ENCODE measurements at regions of chr13 and their contacts with region 1.

Region 1: DNA sequence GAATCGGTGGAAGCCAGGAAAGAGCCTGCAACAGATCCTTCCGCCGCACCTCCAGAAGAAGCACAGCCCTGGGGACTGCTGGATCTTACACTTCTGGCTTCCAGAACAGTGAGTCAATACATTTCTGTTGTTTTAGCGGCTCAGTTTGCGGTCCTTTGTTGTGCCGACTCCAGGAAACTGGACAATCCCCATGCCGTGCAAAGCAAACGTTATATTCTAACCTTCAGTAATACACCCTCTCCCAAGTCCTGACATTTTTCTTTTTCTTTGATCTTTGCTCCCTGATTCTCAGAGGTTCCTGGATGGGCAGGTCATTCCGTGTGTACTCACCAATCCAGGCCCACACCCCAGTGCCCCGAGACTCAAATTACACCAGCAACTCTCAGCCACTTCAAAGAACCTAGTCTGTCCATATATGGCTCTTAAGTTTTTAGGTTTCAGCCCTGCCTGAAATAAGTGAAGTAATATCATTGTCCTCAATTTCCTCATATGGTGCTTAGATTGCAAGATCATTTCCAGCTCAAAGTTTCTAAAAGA is 387.1 kb upstream of the SGCG start:
- DNase-seq: no peak
- ATAC-seq: no peak
- H3K4me3 ChIP-seq: no peak overlapping the region
- H3K27ac ChIP-seq: no peak overlapping the region
- H3K4me1 ChIP-seq: no peaks in the 10 kb centered on the region
- H3K27me3 ChIP-seq: no peaks in the 10 kb centered on the region

Region 2: DNA sequence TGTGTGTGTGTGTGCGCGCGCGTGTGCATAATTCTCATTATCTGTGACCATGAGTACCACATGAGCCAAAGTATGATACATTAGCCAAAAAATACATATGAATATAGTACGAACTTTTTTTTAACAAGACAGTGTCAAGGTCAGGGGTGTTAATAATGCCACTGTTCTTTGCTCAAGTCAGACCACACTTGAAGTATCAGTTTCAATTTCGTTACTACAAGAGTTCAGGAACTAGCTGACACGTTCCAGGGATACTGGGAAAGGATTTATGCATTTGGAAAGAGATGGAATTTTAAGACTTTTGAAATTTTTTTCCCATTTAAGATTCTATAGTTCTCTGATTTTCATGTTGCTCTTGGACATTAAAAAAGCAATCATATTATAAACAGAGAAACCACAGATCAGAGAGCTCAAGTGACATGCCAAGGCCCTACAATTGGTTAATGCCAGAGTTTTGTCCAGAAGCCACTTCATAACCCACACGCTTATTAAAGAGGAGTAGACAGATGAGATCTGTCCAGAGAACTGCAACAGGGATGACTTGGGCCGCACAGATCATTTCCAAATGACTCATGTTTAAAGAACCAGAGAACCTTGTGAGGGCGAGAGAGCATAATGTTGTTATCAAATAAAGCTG is 331.7 kb before region 1 on chr13:
- intact Hi-C with region 1: no loop called
- DNase-seq: no peak
- ATAC-seq: peak; percentile 78 to 88
- H3K4me3 ChIP-seq: no peak overlapping the region
- H3K27ac ChIP-seq: no peak overlapping the region
- H3K4me1 ChIP-seq: peaks cover 2% of the 10 kb centered on the region
- H3K27me3 ChIP-seq: no peaks in the 10 kb centered on the region

Region 3: DNA sequence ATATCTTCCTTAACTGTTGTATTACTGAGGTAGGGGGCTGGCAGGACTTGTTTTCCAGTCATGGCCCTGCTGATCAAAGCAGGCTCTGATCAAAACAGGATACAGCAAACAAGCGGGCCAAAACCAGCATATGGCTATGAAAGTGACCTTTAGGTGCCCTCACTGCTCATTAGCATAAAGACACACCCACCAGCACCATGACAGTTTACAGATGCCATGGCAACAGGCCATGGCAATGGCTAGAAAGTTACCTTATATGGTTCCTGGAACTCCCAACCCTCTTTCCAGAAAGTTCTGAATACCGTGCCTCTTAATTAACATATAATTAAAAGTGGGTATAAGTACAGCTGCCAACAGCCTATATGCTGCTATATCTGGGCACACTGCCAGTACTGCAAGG is 164.3 kb before region 1 on chr13:
- intact Hi-C with region 1: loop called in 1 of 4 experiments (anchors 10 kb)
- DNase-seq: no peak
- ATAC-seq: no peak
- H3K4me3 ChIP-seq: no peak overlapping the region
- H3K27ac ChIP-seq: no peak overlapping the region
- H3K4me1 ChIP-seq: no peaks in the 10 kb centered on the region
- H3K27me3 ChIP-seq: no peaks in the 10 kb centered on the region

Region 4: GRCh38 chr13:22644941-22645340 is 148.7 kb before region 1 on chr13:
- intact Hi-C with region 1: no loop called
- DNase-seq: no peak
- ATAC-seq: no peak
- H3K4me3 ChIP-seq: no peak overlapping the region
- H3K27ac ChIP-seq: no peak overlapping the region
- H3K4me1 ChIP-seq: no peaks in the 10 kb centered on the region
- H3K27me3 ChIP-seq: no peaks in the 10 kb centered on the region